Sigmoid colon (tissue), 7 donors: ENCODE measurements at regions of chr2 and their contacts with region 1.

Region 1: DNA sequence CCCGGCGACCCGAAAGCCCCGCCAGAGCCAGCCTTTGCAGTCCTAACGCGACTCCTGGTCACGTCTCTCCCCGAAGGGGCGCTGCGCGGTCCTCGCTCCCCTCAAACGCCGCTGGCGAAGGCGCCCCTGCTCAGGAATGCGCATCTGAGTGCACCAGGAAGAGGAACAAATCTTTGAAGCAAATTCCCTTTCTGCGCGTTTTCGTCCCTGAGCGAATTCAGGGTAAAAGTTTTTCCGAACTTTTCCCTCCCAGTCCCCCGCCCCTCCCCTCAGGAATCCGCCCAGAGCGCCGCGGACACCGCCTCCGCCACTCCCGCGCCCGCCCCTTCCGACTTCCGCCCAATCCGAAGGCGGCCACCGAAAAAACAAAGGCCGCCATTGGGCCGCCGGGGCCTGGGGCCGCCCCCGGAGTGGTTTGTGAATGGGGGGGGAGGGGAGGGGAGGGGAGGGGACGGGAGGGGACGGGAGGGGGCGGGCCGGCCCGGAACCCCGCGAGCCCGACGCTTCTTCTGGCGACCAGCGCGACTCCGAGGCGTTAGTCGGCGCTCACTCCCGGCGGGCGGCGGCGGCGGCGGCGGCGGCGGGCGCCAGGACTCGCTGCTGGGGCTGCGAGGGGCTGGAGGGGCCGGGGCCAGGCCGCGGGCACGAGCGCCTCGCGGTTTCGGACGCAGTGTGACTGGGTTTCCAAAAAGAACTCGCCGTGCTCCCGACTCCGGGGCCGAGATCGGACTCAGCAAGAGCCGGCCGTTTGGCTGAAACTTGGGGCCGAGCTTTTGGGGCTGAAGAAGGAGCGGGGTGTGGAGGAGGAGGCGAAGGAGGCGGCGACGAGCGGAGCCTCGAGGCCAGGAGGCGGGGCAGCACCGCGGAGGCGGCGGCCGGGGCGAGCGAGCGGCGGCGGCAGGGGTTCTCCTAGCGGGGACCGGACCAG is at the start of gene FZD7:
- DNase-seq: peak; percentile 98
- H3K4me3 ChIP-seq: peak within 1 kb of the TSS; percentile 69 to 84 (median 74)
- H3K27ac ChIP-seq: peak within 1 kb of the TSS; percentile 96 to 99 (median 98)
- H3K4me1 ChIP-seq: peaks cover 0 to 27% (median 12%) of the 10 kb centered on the region in 4 donors
- H3K27me3 ChIP-seq: peaks cover 0 to 5% (median 0%) of the 10 kb centered on the region in 3 donors
- CTCF ChIP-seq: no peak
- EP300 ChIP-seq: no peak
- POLR2A ChIP-seq: peak; percentile 36 to 47
- total RNA-seq, gene FZD7: 37.9 to 51.2 (median 48.1) TPM

Region 2: GRCh38 chr2:201795607-201796477 is 237.7 kb before region 1 on chr2:
- intact Hi-C with region 1: loop called (anchors 5 kb)
- DNase-seq: no peak
- H3K4me3 ChIP-seq: no peak overlapping the region
- H3K27ac ChIP-seq: no peak overlapping the region
- H3K4me1 ChIP-seq: no peaks in the 10 kb centered on the region
- H3K27me3 ChIP-seq: no peaks in the 10 kb centered on the region
- CTCF ChIP-seq: peak; percentile 22 to 53 (median 52)
- EP300 ChIP-seq: no peak
- POLR2A ChIP-seq: no peak

Region 3: GRCh38 chr2:202152104-202152715 is 118.6 kb after region 1 on chr2:
- intact Hi-C with region 1: loop called (anchors 5 kb)
- DNase-seq: no peak
- H3K4me3 ChIP-seq: no peak overlapping the region
- H3K27ac ChIP-seq: no peak overlapping the region
- H3K4me1 ChIP-seq: peaks cover 0 to 44% (median 28%) of the 10 kb centered on the region in 4 donors
- H3K27me3 ChIP-seq: no peaks in the 10 kb centered on the region
- CTCF ChIP-seq: no peak
- EP300 ChIP-seq: no peak
- POLR2A ChIP-seq: no peak

Region 4: GRCh38 chr2:202265467-202266277 is 232.1 kb after region 1 on chr2 and contains the start of gene NOP58:
- intact Hi-C with region 1: loop called (anchors 2 kb)
- DNase-seq: peak; percentile 97
- H3K4me3 ChIP-seq: peak within 1 kb of the TSS; percentile 73 to 95 (median 80)
- H3K27ac ChIP-seq: peak within 1 kb of the TSS; percentile 94 to 99 (median 96)
- H3K4me1 ChIP-seq: peaks cover 0 to 30% (median 28%) of the 10 kb centered on the region in 4 donors
- H3K27me3 ChIP-seq: no peaks in the 10 kb centered on the region
- CTCF ChIP-seq: no peak
- EP300 ChIP-seq: peak in 2 of 4 donors; percentile 61 to 91
- POLR2A ChIP-seq: peak; percentile 97
- total RNA-seq, gene NOP58: 35.9 to 91.1 (median 40.6) TPM

Region 5: DNA sequence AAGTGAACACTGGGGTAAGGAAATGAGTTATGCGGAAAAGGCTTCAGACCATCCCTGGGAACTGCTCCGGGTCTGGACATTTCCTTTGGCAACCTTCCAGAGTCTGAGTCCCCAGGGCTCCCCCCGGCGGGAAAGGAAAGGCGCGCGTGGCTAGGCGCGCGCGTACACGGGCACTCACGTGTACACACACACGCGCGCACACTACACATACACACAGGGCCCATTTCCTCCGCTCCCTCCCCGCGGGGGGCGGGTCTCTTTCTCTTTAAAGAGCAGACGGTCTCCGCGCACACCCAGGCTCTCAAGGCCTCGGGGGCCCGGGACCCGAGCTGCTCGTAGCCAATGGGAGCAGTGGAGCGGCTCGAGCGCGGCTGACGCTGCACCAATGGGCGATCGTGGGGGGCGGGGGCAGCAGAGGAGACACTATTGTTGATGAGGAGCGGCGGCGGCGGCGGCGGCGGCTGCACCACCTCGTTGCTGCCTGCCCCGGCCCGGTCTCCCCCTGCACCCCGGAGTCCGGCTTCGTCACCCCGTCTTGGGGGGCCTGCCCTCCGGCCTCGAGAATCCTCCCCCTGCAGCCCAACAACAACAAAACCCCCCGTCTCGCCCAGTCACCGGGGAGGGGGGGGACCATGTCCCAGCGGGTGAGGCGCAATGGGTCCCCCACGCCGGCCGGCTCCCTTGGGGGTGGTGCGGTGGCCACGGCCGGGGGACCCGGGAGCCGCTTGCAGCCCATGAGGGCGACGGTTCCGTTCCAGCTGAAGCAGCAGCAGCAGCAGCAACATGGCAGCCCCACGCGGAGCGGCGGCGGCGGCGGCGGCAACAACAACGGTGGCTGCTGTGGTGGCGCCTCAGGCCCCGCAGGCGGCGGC is 601.2 kb after region 1 on chr2 and contains the start of gene FAM117B:
- intact Hi-C with region 1: loop called (anchors 10 kb)
- DNase-seq: peak; percentile 99
- H3K4me3 ChIP-seq: peak within 1 kb of the TSS; percentile 96 to 100 (median 99)
- H3K27ac ChIP-seq: peak within 1 kb of the TSS; percentile 90 to 96 (median 91)
- H3K4me1 ChIP-seq: peaks cover 0 to 11% (median 5%) of the 10 kb centered on the region in 4 donors
- H3K27me3 ChIP-seq: no peaks in the 10 kb centered on the region
- CTCF ChIP-seq: no peak
- EP300 ChIP-seq: peak in 1 of 4 donors; percentile 36
- POLR2A ChIP-seq: peak; percentile 25 to 85
- total RNA-seq, gene FAM117B: 3.7 to 8.9 (median 6.2) TPM